ENCODE measurements at regions of chr1 and their contacts with region 1.

Region 1: GRCh38 chr1:173824331-173825081 is at the starts of genes CENPL and DARS2:
- DNase-seq: peak; percentile 100
- ATAC-seq: peak; percentile 88
- H3K4me3 ChIP-seq: peak within 1 kb of the TSS; percentile 72
- H3K27ac ChIP-seq: peak within 1 kb of the TSS; percentile 81
- H3K4me1 ChIP-seq: peaks cover 56% of the 10 kb centered on the region
- H3K27me3 ChIP-seq: no peaks in the 10 kb centered on the region
- CTCF ChIP-seq: no peak
- total RNA-seq, gene CENPL: 92.8 and 108 TPM in 2 replicates
- total RNA-seq, gene DARS2: 71.8 and 77.3 TPM in 2 replicates

Region 2: DNA sequence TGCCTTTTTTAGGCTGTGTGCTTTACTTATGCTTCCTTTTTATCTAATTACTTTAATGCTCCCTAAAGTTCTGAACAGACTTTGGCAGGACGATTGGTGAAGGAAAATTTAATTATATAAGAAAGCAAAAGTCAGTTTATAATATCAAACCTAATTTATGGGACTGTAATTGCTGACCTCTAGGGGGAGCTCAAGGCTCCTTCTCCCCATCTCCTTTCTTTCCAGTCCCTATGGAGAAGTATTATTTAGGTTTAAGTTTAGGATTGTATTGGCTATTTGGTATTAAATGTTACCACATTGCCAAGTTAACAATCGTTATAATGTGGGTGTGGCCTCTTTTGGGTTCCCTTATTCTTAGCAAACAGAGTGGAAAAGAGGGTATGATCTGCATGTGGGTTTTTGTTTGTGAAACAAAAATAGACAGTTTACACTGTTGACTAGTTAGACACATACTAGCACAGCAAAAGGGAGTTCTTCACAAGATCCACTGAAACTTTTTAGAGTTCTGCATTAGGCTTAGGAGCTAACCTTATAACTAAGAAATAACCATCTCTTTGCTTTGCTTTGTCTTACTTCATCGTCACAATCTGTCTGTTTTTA is 569.2 kb before region 1 on chr1:
- CTCF ChIA-PET with region 1: no interaction called
- POLR2A ChIA-PET with region 1: no interaction called
- intact Hi-C with region 1: loop called (anchors 5 kb)
- DNase-seq: peak; percentile 90
- ATAC-seq: peak; percentile 90
- H3K4me3 ChIP-seq: no peak overlapping the region
- H3K27ac ChIP-seq: no peak overlapping the region
- H3K4me1 ChIP-seq: no peaks in the 10 kb centered on the region
- H3K27me3 ChIP-seq: no peaks in the 10 kb centered on the region
- CTCF ChIP-seq: peak; percentile 100

Region 3: DNA sequence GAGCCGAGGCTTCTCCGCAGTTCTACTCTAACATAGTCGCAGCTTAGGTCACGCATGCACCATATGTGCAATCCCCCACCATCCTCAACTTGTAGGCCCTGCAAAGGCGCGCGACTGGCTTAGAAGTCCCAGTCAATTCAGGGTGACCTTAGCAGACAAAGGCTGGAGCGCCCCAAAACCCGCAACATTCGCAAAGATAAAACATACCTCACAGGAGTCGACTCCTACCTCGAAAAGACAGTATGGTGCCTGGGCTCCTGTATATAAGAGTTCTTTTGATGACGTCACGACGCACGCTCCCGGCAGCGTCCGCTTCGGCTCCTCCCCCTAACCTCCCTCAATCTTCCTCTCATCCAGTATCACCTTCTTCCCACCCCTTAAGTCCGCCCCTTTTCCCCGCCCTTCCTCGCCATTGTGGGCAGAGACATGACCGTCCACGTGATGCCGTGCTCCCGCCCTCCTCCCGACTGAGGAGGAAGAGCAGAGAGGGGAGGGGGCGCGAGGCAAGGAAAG is 43.3 kb after region 1 on chr1 and contains the start of gene GAS5:
- CTCF ChIA-PET with region 1: no interaction called
- POLR2A ChIA-PET with region 1: no interaction called
- intact Hi-C with region 1: loop called (anchors 1 kb)
- DNase-seq: peak; percentile 97
- ATAC-seq: peak; percentile 85
- H3K4me3 ChIP-seq: peak within 1 kb of the TSS; percentile 100
- H3K27ac ChIP-seq: peak within 1 kb of the TSS; percentile 85
- H3K4me1 ChIP-seq: peaks cover 19% of the 10 kb centered on the region
- H3K27me3 ChIP-seq: no peaks in the 10 kb centered on the region
- CTCF ChIP-seq: no peak
- total RNA-seq, gene GAS5: 99.2 and 112 TPM in 2 replicates

Measured in PC-3 (cell line).